CD8-positive, alpha-beta memory T cell (primary cell): ENCODE measurements at regions of chr2 and their contacts with region 1.

Region 1: GRCh38 chr2:10408649-10409579 is 39.2 kb downstream of the ODC1 start:
- DNase-seq: peak; percentile 73 to 87 (median 76)
- H3K4me3 ChIP-seq: peak overlapping the region; percentile 29
- H3K4me3 Mint-ChIP-seq: peak overlapping the region; percentile 57 to 92 (median 88)
- H3K27ac ChIP-seq: peak overlapping the region; percentile 52
- H3K27ac Mint-ChIP-seq: peak overlapping the region; percentile 79 to 99 (median 94)
- H3K4me1 ChIP-seq: peaks cover 34% of the 10 kb centered on the region
- H3K4me1 Mint-ChIP-seq: peaks cover 29 to 40% (median 32%) of the 10 kb centered on the region in 3 donors
- H3K27me3 ChIP-seq: no peaks in the 10 kb centered on the region
- H3K27me3 Mint-ChIP-seq: peaks cover 0 to 1% of the 10 kb centered on the region in 2 donors

Region 2: DNA sequence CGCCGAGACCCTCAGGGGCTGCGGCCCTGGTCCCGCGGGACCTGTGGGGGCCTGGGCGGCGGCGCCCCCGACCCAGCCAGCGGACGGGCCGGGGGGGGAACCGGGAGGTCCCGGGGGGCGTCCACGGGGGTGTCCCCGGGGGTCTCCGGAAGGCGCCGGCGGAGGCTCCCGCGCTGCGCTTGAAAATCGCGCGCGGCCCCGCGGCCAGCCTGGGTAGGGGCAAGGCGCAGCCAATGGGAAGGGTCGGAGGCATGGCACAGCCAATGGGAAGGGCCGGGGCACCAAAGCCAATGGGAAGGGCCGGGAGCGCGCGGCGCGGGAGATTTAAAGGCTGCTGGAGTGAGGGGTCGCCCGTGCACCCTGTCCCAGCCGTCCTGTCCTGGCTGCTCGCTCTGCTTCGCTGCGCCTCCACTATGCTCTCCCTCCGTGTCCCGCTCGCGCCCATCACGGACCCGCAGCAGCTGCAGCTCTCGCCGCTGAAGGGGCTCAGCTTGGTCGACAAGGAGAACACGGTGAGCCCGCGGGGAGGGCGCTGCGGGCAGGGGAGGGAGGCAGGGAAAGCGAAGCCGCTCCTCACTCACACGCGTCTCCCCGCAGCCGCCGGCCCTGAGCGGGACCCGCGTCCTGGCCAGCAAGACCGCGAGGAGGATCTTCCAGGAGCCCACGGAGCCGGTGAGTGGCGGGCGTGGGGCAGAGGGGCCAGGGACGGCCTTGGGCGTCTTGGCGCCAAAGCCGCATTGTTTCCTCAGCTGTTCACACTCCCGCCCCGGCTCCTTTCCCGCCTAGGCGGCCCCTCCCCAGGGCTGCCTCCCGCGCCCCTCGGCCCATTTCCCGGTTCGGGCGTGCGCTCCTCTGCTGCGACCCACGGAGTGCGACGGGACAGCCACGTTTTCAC is 286.3 kb before region 1 on chr2 and contains the start of gene RRM2:
- CTCF ChIA-PET with region 1: interaction called, 71 read pairs
- POLR2A ChIA-PET with region 1: interaction called, 3 read pairs
- DNase-seq: peak; percentile 81 to 91 (median 82)
- H3K4me3 ChIP-seq: peak within 1 kb of the TSS; percentile 53
- H3K4me3 Mint-ChIP-seq: peak within 1 kb of the TSS; percentile 85 to 98 (median 98)
- H3K27ac ChIP-seq: peak within 1 kb of the TSS; percentile 78
- H3K27ac Mint-ChIP-seq: peak within 1 kb of the TSS in 7 of 8 donors; percentile 51 to 81 (median 68)
- H3K4me1 ChIP-seq: peaks cover 36% of the 10 kb centered on the region
- H3K4me1 Mint-ChIP-seq: peaks cover 41 to 59% (median 57%) of the 10 kb centered on the region in 3 donors
- H3K27me3 ChIP-seq: peaks cover 7% of the 10 kb centered on the region
- H3K27me3 Mint-ChIP-seq: peaks cover 15 to 17% of the 10 kb centered on the region in 2 donors
- total RNA-seq, gene RRM2: 425 to 427 TPM

Region 3: GRCh38 chr2:10141736-10142642 is 266.9 kb before region 1 on chr2:
- CTCF ChIA-PET with region 1: interaction called, 16 read pairs
- POLR2A ChIA-PET with region 1: no interaction called
- DNase-seq: peak in 2 of 5 donors; percentile 42 to 54
- H3K4me3 ChIP-seq: no peak overlapping the region
- H3K4me3 Mint-ChIP-seq: peak overlapping the region in 5 of 7 donors; percentile 19 to 83 (median 36)
- H3K27ac ChIP-seq: no peak overlapping the region
- H3K27ac Mint-ChIP-seq: peak overlapping the region in 5 of 8 donors; percentile 54 to 95 (median 78)
- H3K4me1 ChIP-seq: peaks cover 13% of the 10 kb centered on the region
- H3K4me1 Mint-ChIP-seq: peaks cover 11 to 24% (median 20%) of the 10 kb centered on the region in 3 donors
- H3K27me3 ChIP-seq: no peaks in the 10 kb centered on the region
- H3K27me3 Mint-ChIP-seq: no peaks in the 10 kb centered on the region

Region 4: GRCh38 chr2:10285556-10286198 is 123.2 kb before region 1 on chr2:
- CTCF ChIA-PET with region 1: interaction called, 11 read pairs
- POLR2A ChIA-PET with region 1: no interaction called
- DNase-seq: peak in 1 of 5 donors; percentile 47
- H3K4me3 ChIP-seq: no peak overlapping the region
- H3K4me3 Mint-ChIP-seq: no peak overlapping the region
- H3K27ac ChIP-seq: no peak overlapping the region
- H3K27ac Mint-ChIP-seq: no peak overlapping the region
- H3K4me1 ChIP-seq: no peaks in the 10 kb centered on the region
- H3K4me1 Mint-ChIP-seq: no peaks in the 10 kb centered on the region
- H3K27me3 ChIP-seq: no peaks in the 10 kb centered on the region
- H3K27me3 Mint-ChIP-seq: no peaks in the 10 kb centered on the region

Region 5: DNA sequence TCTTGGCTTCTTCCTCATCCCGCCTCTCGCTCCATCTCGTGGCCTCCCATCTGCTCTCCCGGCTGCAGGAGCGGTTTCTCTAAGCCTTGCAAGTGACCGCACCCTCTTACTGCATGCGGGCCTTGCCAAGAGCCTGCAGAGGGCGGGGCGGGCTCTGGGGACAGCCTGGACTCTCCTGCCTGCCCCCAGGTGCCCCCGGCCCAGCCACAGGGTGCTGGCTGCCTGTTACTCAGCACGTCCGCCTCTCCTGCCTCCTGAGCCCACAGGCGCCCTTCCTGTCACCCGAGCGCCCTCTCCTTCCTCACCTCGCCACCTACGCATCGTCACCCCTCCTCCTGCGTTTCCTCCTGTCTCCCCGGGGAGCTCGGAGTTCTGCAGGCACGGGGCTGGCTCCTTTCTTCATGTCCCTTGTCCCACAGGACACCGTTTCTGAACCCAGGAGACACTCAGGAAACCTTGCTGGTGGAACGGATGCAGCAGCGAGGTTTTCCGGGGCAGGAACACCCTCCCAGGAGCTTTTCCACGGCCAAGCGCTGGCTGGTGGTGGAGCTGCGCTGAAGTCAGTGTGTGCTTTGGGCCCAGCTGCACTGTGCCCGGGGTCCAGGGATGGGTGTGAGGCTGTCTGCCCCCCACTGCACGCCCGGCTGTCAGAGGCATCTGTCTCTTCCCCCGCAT is 77.8 kb before region 1 on chr2:
- CTCF ChIA-PET with region 1: interaction called, 68 read pairs
- POLR2A ChIA-PET with region 1: interaction called, 8 read pairs
- DNase-seq: peak; percentile 59 to 78 (median 67)
- H3K4me3 ChIP-seq: peak overlapping the region; percentile 86
- H3K4me3 Mint-ChIP-seq: peak overlapping the region; percentile 90 to 93 (median 92)
- H3K27ac ChIP-seq: peak overlapping the region; percentile 76
- H3K27ac Mint-ChIP-seq: peak overlapping the region; percentile 89 to 98 (median 94)
- H3K4me1 ChIP-seq: peaks cover 76% of the 10 kb centered on the region
- H3K4me1 Mint-ChIP-seq: peaks cover 80 to 89% (median 88%) of the 10 kb centered on the region in 3 donors
- H3K27me3 ChIP-seq: no peaks in the 10 kb centered on the region
- H3K27me3 Mint-ChIP-seq: peaks cover 0 to 2% of the 10 kb centered on the region in 2 donors

Region 6: GRCh38 chr2:10390369-10390801 is 18.5 kb before region 1 on chr2:
- CTCF ChIA-PET with region 1: interaction called, 13 read pairs
- POLR2A ChIA-PET with region 1: no interaction called
- DNase-seq: no peak
- H3K4me3 ChIP-seq: no peak overlapping the region
- H3K4me3 Mint-ChIP-seq: no peak overlapping the region
- H3K27ac ChIP-seq: no peak overlapping the region
- H3K27ac Mint-ChIP-seq: peak overlapping the region in 2 of 8 donors; percentile 27 to 74
- H3K4me1 ChIP-seq: peaks cover 28% of the 10 kb centered on the region
- H3K4me1 Mint-ChIP-seq: peaks cover 45 to 87% (median 50%) of the 10 kb centered on the region in 3 donors
- H3K27me3 ChIP-seq: no peaks in the 10 kb centered on the region
- H3K27me3 Mint-ChIP-seq: no peaks in the 10 kb centered on the region

Region 7: DNA sequence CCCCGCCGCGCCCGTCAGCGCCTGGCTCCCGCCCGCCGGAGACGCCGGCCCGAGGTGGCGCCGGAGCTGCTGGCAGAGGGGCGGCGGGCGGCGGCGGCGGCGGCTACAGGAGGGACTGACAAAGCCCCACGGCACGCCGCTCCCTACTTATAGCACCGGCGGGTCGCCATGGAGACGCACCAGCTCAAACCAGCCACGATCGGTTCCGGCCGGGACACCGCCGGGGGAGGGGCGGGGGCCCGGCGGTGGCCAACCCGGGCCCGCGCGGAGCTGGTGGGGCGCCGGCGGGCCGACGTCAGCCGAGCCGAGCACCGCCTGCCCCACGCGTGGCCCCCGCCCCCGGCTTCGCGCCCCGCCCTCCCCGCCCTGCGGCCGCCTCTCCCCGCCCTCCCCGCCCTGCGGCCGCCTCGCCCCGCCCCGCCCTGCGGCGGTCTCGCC is 39.3 kb after region 1 on chr2 and contains the start of gene ODC1:
- CTCF ChIA-PET with region 1: interaction called, 20 read pairs
- POLR2A ChIA-PET with region 1: interaction called, 7 read pairs
- DNase-seq: peak; percentile 96 to 99 (median 98)
- H3K4me3 ChIP-seq: peak within 1 kb of the TSS; percentile 81
- H3K4me3 Mint-ChIP-seq: peak within 1 kb of the TSS; percentile 78 to 92 (median 85)
- H3K27ac ChIP-seq: peak within 1 kb of the TSS; percentile 95
- H3K27ac Mint-ChIP-seq: peak within 1 kb of the TSS; percentile 78 to 95 (median 89)
- H3K4me1 ChIP-seq: peaks cover 35% of the 10 kb centered on the region
- H3K4me1 Mint-ChIP-seq: peaks cover 29 to 45% (median 45%) of the 10 kb centered on the region in 3 donors
- H3K27me3 ChIP-seq: no peaks in the 10 kb centered on the region
- H3K27me3 Mint-ChIP-seq: no peaks in the 10 kb centered on the region
- total RNA-seq, gene ODC1: 565 to 566 TPM